Activated T-helper 1 cell treated with anti-CD3 and anti-CD28 coated beads, Interleukin-12 subunit alpha, Interleukin-12 subunit beta, Interleukin-2, Interleukin-4 antibody, amounts not matched to agents 30 ng/mL and 10 ng/mL and 1 ng/mL, durations not matched to agents 14 hours and 24 hours and 36 hours (primary cell): ENCODE measurements at regions of chr11 and their contacts with region 1.

Region 1: GRCh38 chr11:76807206-76807875 is 24.2 kb downstream of the TSKU start:
- DNase-seq: peak; percentile 38
- H3K4me3 Mint-ChIP-seq: no peak overlapping the region
- H3K27ac Mint-ChIP-seq: no peak overlapping the region
- H3K4me1 Mint-ChIP-seq: peaks cover 43% of the 10 kb centered on the region
- H3K27me3 Mint-ChIP-seq: peaks cover 18% of the 10 kb centered on the region

Region 2: GRCh38 chr11:76318744-76319384 is 488.5 kb before region 1 on chr11:
- intact Hi-C with region 1: no loop called
- DNase-seq: peak; percentile 70
- H3K4me3 Mint-ChIP-seq: no peak overlapping the region
- H3K27ac Mint-ChIP-seq: no peak overlapping the region
- H3K4me1 Mint-ChIP-seq: peaks cover 11% of the 10 kb centered on the region
- H3K27me3 Mint-ChIP-seq: peaks cover 31% of the 10 kb centered on the region

Region 3: DNA sequence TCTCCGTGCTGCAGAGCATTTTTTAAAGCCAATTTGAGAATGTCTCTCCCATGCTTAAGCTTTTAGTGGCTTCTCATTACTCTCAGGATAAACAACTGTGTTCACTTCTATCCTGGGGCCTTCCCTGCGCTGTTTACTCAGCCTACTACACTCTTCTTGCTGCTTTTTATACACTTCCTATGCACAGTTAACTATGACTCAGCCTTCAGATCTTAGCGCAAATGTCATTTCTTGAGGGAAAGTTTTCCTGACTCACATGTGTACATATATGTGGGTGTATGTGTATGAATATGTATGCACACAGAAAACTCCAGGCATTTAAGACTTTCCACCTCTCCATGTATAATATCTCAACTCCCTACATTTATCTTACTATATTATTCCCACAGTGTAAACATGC is 436.2 kb before region 1 on chr11:
- intact Hi-C with region 1: loop called (anchors 5 kb)
- DNase-seq: no peak
- H3K4me3 Mint-ChIP-seq: peak overlapping the region; percentile 52
- H3K27ac Mint-ChIP-seq: peak overlapping the region; percentile 86
- H3K4me1 Mint-ChIP-seq: peaks cover 33% of the 10 kb centered on the region
- H3K27me3 Mint-ChIP-seq: no peaks in the 10 kb centered on the region

Region 4: GRCh38 chr11:76734456-76735420 is 72.6 kb before region 1 on chr11:
- intact Hi-C with region 1: loop called (anchors 1 kb)
- DNase-seq: no peak
- H3K4me3 Mint-ChIP-seq: no peak overlapping the region
- H3K27ac Mint-ChIP-seq: no peak overlapping the region
- H3K4me1 Mint-ChIP-seq: no peaks in the 10 kb centered on the region
- H3K27me3 Mint-ChIP-seq: peaks cover 9% of the 10 kb centered on the region

Region 5: GRCh38 chr11:76860539-76861475 is 53.5 kb after region 1 on chr11 and contains the start of gene ACER3:
- intact Hi-C with region 1: loop called (anchors 1 kb)
- DNase-seq: peak; percentile 87
- H3K4me3 Mint-ChIP-seq: peak within 1 kb of the TSS; percentile 90
- H3K27ac Mint-ChIP-seq: peak within 1 kb of the TSS; percentile 73
- H3K4me1 Mint-ChIP-seq: peaks cover 33% of the 10 kb centered on the region
- H3K27me3 Mint-ChIP-seq: peaks cover 2% of the 10 kb centered on the region
- total RNA-seq, gene ACER3: 9.9 and 12.2 TPM in 2 replicates

Region 6: DNA sequence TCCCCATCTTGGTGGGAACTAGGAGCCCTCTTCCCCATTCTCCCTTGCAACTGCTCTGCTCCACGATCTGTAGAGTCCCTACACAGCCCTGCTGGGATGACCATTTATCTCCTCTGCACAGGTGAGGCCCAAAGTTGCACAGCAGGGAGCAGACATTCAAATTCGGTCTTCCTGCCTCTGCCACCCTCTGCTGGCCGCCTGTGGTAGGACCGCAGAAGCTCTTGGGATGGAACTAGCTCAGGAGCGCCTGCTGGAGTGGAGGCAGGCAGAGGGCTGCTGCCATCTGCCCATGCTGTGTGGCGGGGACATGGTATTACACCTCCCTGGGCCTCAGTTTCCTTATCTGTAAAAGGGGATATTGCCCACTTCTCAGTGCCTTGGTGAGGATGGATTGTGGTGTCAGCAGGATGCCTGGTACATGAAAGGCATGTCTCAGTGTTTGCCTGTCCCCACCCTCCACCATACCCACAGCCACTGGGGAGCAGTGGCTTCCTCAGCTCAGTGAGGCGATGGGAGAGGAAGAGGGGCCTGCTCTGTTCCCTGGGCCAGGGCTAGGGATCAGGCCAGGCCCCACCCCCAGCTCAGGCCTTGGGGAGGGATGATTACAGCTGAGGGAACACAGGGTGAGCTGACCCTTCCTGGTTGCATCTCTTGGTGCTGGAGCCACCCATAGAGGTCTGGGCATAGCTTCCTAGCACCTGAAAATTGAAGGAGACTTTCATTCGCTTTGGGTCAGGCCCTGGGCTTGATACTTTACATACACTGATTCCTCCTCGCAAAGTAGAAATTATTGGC is 284.0 kb after region 1 on chr11:
- intact Hi-C with region 1: loop called (anchors 2 kb)
- DNase-seq: peak; percentile 69
- H3K4me3 Mint-ChIP-seq: no peak overlapping the region
- H3K27ac Mint-ChIP-seq: no peak overlapping the region
- H3K4me1 Mint-ChIP-seq: peaks cover 8% of the 10 kb centered on the region
- H3K27me3 Mint-ChIP-seq: peaks cover 3% of the 10 kb centered on the region